ENCODE measurements at regions of chr5 and their contacts with region 1.

Region 1: GRCh38 chr5:10563945-10564837 is at the start of gene ANKRD33B:
- DNase-seq: peak; percentile 67 to 86 (median 84)
- ATAC-seq: peak; percentile 80 to 83
- H3K4me3 ChIP-seq: peak within 1 kb of the TSS; percentile 72
- H3K27ac ChIP-seq: peak within 1 kb of the TSS; percentile 39
- H3K4me1 ChIP-seq: no peaks in the 10 kb centered on the region
- H3K27me3 ChIP-seq: no peaks in the 10 kb centered on the region
- total RNA-seq, gene ANKRD33B: 2.2 to 2.7 (median 2.4) TPM

Region 2: GRCh38 chr5:10611290-10611689 is 47.1 kb after region 1 on chr5:
- intact Hi-C with region 1: loop called in 1 of 4 experiments (anchors 10 kb)
- DNase-seq: no peak
- ATAC-seq: peak in 1 of 2 donors; percentile 20
- H3K4me3 ChIP-seq: no peak overlapping the region
- H3K27ac ChIP-seq: peak overlapping the region; percentile 17
- H3K4me1 ChIP-seq: peaks cover 9% of the 10 kb centered on the region
- H3K27me3 ChIP-seq: no peaks in the 10 kb centered on the region

Region 3: GRCh38 chr5:10627160-10627701 is 63.0 kb after region 1 on chr5:
- intact Hi-C with region 1: loop called in 2 of 4 experiments (anchors 10 kb)
- DNase-seq: no peak
- ATAC-seq: peak; percentile 2 to 22
- H3K4me3 ChIP-seq: peak overlapping the region; percentile 1
- H3K27ac ChIP-seq: peak overlapping the region; percentile 39
- H3K4me1 ChIP-seq: peaks cover 2% of the 10 kb centered on the region
- H3K27me3 ChIP-seq: no peaks in the 10 kb centered on the region

Region 4: DNA sequence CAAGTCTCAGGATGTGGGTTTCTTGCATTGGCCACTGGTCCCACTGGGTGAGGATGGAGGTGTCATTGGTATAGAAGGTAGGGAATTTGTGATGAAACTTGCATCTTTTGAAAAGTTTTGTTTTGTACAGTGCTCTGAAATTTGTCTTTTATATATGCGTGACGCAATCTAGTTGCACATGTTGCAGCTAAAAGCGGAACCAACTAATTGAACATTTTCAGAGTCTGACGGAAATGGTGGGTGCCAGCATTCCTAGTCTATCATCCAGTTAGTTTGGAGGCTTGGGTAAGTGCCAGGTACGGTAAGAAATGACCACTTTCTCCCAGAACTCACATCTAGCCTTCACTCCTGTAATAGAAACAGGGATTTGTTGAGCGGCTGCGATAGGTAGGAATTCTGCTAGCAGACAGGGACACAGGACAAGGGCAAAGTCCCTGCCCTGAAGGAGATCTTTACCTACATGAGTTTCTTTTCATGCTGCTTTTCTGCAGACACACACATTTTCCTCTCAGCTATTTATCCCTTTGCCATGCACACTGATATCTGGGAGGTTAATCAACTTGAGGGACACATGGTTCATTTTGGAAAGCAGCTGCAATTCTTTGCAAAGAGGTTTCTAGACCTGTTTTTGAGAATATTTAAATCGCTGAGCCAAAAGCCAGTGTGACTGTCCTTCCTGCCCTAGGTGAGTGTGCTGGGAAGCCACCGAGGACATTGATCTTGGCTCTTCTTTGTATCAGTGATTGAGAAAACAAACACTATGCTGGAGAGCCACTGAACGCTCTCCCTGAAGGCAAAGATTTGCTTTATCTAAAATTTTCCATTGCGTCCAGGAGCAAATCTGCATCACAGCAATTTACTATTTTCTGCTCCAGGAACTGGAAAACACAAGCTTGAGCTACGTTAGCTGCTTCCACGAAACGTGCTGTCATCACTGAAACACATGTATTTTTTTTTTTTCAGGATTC is 107.1 kb after region 1 on chr5:
- intact Hi-C with region 1: no loop called
- DNase-seq: no peak
- ATAC-seq: no peak
- H3K4me3 ChIP-seq: no peak overlapping the region
- H3K27ac ChIP-seq: no peak overlapping the region
- H3K4me1 ChIP-seq: no peaks in the 10 kb centered on the region
- H3K27me3 ChIP-seq: no peaks in the 10 kb centered on the region

Region 5: GRCh38 chr5:11377896-11378295 is 813.7 kb after region 1 on chr5:
- intact Hi-C with region 1: no loop called
- DNase-seq: no peak
- ATAC-seq: no peak
- H3K4me3 ChIP-seq: no peak overlapping the region
- H3K27ac ChIP-seq: no peak overlapping the region
- H3K4me1 ChIP-seq: no peaks in the 10 kb centered on the region
- H3K27me3 ChIP-seq: no peaks in the 10 kb centered on the region

Measured in right cardiac atrium (tissue), 5 donors.